Activated T-helper 1 cell treated with anti-CD3 and anti-CD28 coated beads, Interleukin-12 subunit alpha, Interleukin-12 subunit beta, Interleukin-2, Interleukin-4 antibody, amounts not matched to agents 30 ng/mL and 10 ng/mL and 1 ng/mL, durations not matched to agents 14 hours and 24 hours and 36 hours (primary cell): ENCODE measurements at regions of chr7 and their contacts with region 1.

Region 1: DNA sequence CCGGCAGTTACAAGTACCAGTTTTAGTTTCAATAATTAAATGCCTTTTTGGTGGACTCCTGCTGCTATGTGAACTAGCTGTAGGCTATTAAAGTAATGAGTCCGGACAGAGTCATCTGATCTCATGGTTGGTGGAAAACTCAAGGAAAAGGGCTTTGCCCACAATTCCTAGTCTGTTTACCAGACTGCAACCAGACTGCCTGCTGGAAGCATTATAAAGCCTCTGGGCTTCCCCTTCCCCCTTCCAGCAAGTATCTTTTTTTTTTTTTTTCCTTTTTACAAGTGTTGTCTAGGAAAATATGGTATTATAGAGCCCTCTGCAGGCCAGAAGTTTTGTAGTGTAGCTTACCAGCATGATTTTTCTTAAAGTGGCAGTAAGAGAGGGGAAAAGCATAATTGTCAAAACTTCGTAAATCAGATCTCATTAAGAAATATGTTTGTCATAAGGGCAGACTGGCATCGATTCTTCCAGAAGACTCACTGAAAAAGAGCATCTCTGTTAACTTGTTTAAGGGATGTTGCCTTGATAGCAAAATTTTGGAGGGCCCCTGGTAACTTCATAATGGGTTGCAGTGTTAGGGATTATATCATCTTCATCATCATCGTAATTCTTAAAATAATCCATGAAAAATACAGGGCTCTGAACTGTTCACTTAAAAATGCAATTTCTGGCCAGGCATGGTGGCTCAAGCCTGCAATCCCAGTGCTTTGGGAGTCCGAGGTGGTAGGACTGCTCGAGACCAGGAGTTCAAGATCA is 181.3 kb downstream of the TAX1BP1 start:
- DNase-seq: no peak
- H3K4me3 Mint-ChIP-seq: no peak overlapping the region
- H3K27ac Mint-ChIP-seq: no peak overlapping the region
- H3K4me1 Mint-ChIP-seq: peaks cover 10% of the 10 kb centered on the region
- H3K27me3 Mint-ChIP-seq: peaks cover 2% of the 10 kb centered on the region

Region 2: GRCh38 chr7:27210441-27211083 is 710.7 kb before region 1 on chr7:
- intact Hi-C with region 1: loop called (anchors 1 kb)
- DNase-seq: no peak
- H3K4me3 Mint-ChIP-seq: peak overlapping the region; percentile 4
- H3K27ac Mint-ChIP-seq: no peak overlapping the region
- H3K4me1 Mint-ChIP-seq: no peaks in the 10 kb centered on the region
- H3K27me3 Mint-ChIP-seq: peaks cover 91% of the 10 kb centered on the region

Region 3: DNA sequence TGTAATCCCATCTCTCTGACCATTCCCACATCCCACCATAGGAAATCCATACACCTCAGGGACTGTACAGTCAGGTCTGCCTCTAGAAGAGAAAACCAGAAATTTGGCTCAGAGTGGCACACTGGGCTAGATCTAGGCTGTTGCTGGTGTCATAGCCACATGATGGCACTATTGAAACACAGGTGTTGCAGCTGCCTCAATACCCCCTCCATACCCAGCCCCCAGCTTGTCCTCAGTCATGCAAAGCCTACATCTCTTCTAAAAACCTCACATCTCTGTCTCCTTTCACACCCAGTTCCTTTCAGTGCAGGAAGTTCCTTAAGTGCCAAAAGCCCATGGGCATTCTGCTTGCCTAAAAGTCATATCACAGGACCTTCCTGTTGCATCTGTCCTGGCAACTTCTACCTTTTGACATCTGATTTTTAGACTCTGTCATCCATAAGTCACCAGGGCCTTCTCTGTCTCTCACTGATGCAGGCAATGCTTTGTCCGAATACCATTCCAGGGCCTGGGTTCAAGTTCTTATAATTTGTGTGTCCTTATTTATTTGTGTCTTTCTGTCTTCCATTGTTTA is 231.6 kb before region 1 on chr7:
- intact Hi-C with region 1: loop called (anchors 1 kb)
- DNase-seq: no peak
- H3K4me3 Mint-ChIP-seq: no peak overlapping the region
- H3K27ac Mint-ChIP-seq: no peak overlapping the region
- H3K4me1 Mint-ChIP-seq: no peaks in the 10 kb centered on the region
- H3K27me3 Mint-ChIP-seq: peaks cover 6% of the 10 kb centered on the region

Region 4: GRCh38 chr7:27784393-27785053 is 136.7 kb before region 1 on chr7:
- intact Hi-C with region 1: loop called (anchors 2 kb)
- DNase-seq: peak; percentile 2
- H3K4me3 Mint-ChIP-seq: no peak overlapping the region
- H3K27ac Mint-ChIP-seq: peak overlapping the region; percentile 20
- H3K4me1 Mint-ChIP-seq: peaks cover 24% of the 10 kb centered on the region
- H3K27me3 Mint-ChIP-seq: no peaks in the 10 kb centered on the region

Region 5: DNA sequence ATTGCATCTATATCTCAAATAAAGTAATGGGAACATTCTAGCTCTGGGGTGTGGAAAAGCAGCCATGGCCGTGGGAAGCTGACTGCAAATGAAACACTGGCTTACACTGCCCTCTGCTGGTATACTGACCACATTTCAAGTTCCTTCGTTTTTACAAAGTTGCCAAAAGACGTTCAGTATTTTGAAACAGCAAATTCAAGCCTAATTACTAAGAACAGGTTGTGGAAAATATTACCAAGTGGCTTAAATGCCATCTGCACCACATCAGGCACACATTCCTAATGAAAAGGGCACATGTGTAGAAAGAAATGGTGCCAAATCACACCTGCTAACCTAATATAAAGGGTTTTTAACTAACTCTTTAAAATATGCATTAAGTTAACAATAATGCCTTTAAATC is 175.5 kb after region 1 on chr7:
- intact Hi-C with region 1: loop called (anchors 10 kb)
- DNase-seq: no peak
- H3K4me3 Mint-ChIP-seq: no peak overlapping the region
- H3K27ac Mint-ChIP-seq: no peak overlapping the region
- H3K4me1 Mint-ChIP-seq: no peaks in the 10 kb centered on the region
- H3K27me3 Mint-ChIP-seq: peaks cover 10% of the 10 kb centered on the region